ENCODE measurements at regions of chr1 and their contacts with region 1.

Region 1: GRCh38 chr1:112715264-112716053 is at the start of gene PPM1J:
- DNase-seq: peak; percentile 94
- H3K27ac ChIP-seq: peak within 1 kb of the TSS; percentile 70
- CTCF ChIP-seq: no peak

Region 2: DNA sequence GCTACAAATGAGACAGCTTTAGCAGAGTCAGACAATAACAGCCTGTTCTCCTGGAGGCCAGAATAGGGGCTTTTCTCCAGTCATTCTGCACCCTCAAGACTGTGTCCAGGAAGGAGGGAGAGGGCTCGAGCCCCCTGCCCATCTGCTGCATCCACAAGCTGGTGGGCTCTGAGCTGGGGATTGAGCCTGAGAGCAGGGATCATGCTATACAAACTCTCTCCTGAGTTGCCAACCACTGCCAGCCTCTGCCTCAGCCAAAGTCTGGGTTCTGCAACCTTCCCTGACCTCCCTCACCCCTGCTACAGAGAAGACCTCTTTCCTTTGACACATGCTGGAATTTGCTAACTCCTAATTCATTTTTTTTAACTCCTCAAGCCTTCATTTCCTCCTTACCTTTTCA is 14.4 kb after region 1 on chr1:
- CTCF ChIA-PET with region 1: interaction called, 14 read pairs
- POLR2A ChIA-PET with region 1: no interaction called
- DNase-seq: no peak
- H3K27ac ChIP-seq: no peak overlapping the region
- CTCF ChIP-seq: no peak

Region 3: GRCh38 chr1:112744009-112744578 is 28.6 kb after region 1 on chr1:
- CTCF ChIA-PET with region 1: interaction called, 14 read pairs
- POLR2A ChIA-PET with region 1: no interaction called
- DNase-seq: no peak
- H3K27ac ChIP-seq: no peak overlapping the region
- CTCF ChIP-seq: peak; percentile 19; the same call in 1 of the 2 replicates

Region 4: GRCh38 chr1:112762541-112763517 is 47.4 kb after region 1 on chr1:
- CTCF ChIA-PET with region 1: interaction called, 10 read pairs
- POLR2A ChIA-PET with region 1: no interaction called
- DNase-seq: peak; percentile 79
- H3K27ac ChIP-seq: peak overlapping the region; percentile 43
- CTCF ChIP-seq: no peak

Region 5: DNA sequence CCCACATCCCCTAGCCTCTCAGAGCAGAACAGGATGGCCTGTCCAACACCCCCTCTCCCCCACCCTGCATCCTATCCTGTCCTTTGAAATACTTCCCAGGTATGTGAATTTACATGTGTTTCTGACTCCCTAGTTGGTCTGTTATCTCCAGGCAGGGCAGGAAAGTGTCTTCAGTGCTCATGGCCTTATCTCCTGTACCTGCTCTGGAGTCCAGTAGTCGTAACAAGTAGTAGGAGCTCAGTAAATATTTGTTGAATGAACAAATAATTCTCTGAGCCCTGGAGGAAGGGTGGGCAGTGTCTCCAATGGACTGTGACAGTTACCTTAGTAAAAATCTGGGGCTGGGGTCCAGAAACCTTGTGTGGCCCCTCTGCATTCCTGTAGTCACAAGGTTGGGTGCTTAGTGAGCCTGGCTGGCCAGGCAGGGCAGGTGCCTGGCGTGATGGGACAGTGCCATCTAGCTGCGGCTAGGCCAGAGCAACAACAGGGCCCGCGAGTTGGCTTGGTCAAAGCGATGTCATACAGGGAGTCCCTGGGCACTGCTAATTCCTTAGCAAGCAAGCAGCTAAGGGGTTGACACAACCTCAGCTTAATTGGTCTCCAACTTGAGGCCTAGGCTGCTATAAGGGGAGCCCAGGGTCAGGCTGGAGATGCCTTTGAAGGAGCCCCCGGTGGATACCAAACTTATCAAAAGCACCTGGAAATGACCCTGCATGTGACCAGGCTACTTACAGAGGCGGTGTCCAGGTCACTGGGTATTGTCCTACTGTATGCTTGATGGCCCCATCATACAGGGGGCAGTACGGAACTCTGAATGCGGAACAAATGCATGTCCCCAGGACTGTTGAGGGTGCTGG is 88.7 kb after region 1 on chr1:
- CTCF ChIA-PET with region 1: interaction called, 282 read pairs
- POLR2A ChIA-PET with region 1: no interaction called
- DNase-seq: peak; percentile 81
- H3K27ac ChIP-seq: no peak overlapping the region
- CTCF ChIP-seq: peak; percentile 83

Region 6: DNA sequence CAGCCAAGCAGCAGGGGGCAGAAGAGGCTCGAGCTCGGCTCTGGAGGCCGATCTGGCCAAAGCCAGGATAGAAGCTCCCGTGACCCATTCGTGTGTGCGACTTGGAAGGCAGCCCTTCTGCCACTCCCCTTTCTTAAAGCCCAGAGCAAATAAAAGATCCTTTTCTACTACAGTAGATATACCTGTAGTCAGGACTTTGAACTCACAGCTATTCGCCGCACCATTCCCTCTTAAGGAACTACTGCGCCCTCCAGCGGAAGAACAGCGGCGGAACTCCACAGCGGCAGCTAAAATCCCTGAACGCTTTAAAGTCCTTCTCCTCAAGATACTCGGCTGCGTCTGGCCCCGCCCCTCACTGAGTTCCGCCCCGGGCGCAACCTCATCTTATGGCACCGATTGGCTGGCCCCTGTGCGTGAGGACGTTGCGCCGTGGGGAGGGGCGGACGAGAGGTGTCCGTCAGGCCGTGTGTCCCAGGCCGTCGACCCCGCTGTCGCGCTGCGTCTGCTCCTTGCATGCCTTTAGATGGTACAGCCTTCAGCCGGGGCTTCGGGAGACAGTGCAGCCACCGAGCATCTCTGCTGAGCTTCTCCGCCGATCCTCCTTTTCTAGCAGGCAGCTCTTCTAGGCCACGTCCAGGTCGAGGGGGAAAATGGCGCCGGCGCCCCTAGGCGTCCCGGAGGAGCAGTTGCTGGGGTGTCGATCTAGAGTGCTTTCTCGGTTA is 357.5 kb after region 1 on chr1 and contains the start of gene LRIG2:
- CTCF ChIA-PET with region 1: interaction called, 16 read pairs
- POLR2A ChIA-PET with region 1: no interaction called
- DNase-seq: peak; percentile 96
- H3K27ac ChIP-seq: peak within 1 kb of the TSS; percentile 87
- CTCF ChIP-seq: peak; percentile 94

Region 7: GRCh38 chr1:113579256-113580018 is 864.0 kb after region 1 on chr1:
- CTCF ChIA-PET with region 1: no interaction called
- POLR2A ChIA-PET with region 1: no interaction called
- DNase-seq: no peak
- H3K27ac ChIP-seq: no peak overlapping the region
- CTCF ChIP-seq: no peak

Measured in RWPE1 (cell line).